ENCODE measurements at regions of chr22 and their contacts with region 1.

Region 1: DNA sequence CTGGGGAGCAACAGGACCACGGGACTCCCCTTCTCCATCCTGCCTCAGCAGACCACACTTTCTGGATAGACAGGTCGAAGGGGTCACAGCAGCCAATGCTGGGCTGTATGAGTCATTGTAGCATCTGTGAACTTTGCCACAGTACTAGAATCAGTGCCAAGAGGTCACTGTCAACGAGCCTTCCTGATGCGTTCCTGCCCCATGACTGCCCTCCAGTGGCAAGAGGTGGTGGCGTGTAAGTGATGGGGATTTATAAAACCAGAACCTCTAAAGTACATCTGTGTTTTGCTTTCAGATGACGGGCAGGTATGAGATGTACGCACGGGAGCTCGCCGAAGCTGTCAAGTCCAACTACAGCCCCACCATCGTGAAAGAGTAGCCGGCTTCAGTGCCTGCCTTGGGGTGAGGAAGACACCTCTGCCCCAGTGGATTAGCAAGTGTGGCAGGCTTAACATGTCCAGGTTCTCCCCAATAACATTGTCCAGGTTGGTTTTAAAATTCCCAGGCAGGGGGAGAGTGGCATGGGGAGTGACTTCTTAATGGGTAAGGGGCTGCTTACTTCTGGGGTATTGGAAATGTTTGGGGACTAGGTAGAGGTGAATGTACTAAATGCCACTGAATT is 29.4 kb downstream of the GUCD1 start:
- DNase-seq: peak; percentile 75 to 94 (median 86)
- ATAC-seq: peak; percentile 93
- H3K4me3 ChIP-seq: no peak overlapping the region
- H3K4me1 ChIP-seq: peaks cover 3% of the 10 kb centered on the region
- CTCF ChIP-seq: peak; percentile 73

Region 2: GRCh38 chr22:24325105-24325757 is 200.3 kb before region 1 on chr22:
- intact Hi-C with region 1: loop called in 1 of 2 experiments (anchors 10 kb)
- DNase-seq: peak in 1 of 3 donors; percentile 55
- ATAC-seq: peak; percentile 88
- H3K4me3 ChIP-seq: no peak overlapping the region
- H3K4me1 ChIP-seq: peaks cover 9% of the 10 kb centered on the region
- CTCF ChIP-seq: peak; percentile 37

Region 3: DNA sequence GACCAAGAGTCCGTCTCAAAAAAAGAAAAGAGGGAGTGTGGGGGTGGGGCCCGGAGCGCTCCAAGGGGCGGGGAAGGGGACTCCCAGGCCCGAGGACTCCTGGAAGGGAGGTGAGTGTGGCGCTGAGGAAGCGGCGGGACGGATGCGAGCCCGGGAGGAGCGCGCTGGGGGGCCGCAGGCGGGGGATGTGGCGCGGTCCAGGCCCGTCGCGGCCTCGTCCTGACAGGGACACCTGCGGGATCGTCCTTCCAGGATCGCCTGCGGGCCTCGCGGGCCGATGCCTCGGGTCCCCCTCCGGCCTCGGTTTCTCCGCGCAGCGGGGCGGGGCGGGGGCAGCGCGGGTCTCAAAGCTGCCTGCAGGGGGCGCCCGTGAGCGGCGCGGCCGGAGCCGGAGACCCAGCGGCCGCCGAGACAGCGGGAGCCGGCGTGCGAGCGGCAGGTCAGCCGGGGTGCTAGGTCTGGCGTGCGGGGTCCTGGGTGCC is 102.0 kb before region 1 on chr22:
- intact Hi-C with region 1: loop called in 1 of 2 experiments (anchors 10 kb)
- DNase-seq: peak; percentile 60 to 76 (median 75)
- ATAC-seq: peak; percentile 69
- H3K4me3 ChIP-seq: no peak overlapping the region
- H3K4me1 ChIP-seq: peaks cover 13% of the 10 kb centered on the region
- CTCF ChIP-seq: peak; percentile 96